Activated CD4-positive, alpha-beta T cell treated with anti-CD3 and anti-CD28 coated beads for 36 hours (primary cell): ENCODE measurements at regions of chr1 and their contacts with region 1.

Region 1: DNA sequence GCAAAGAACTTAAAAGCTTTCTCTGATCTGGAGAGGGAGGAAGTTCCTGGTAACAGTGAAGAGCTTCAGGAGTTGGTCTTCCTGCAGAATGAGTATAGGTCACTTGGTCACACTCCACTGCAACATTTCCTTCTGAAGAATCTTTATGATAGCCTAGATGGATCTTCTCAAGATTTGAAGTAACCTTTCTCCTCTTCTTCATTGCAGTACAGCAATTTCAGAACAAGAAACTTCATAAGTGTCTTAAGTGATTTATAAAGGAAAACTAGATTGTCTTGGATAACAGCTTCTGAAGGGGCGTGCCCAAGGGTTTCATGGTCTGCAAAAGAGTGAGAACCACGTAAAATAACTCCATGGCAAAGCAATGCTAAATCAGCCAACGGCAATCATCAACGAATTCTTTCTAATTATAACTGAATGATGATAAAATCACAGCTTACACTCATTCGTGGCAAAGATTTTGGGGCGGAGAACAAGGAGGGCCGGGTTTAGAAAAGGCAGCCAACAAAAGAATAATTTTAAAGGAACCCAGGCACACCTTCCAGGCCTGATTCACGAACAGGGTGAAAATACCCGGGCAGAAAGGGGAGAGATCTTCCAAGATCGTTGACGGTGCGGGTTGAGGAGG is 53.9 kb upstream of the ASPM start:
- DNase-seq: peak; percentile 48
- ATAC-seq: no peak
- H3K4me3 Mint-ChIP-seq: peak overlapping the region; percentile 96
- H3K27ac Mint-ChIP-seq: peak overlapping the region; percentile 94
- H3K4me1 Mint-ChIP-seq: peaks cover 54% of the 10 kb centered on the region
- H3K27me3 Mint-ChIP-seq: no peaks in the 10 kb centered on the region

Region 2: GRCh38 chr1:197156691-197157090 is 43.7 kb before region 1 on chr1:
- CTCF ChIA-PET with region 1: no interaction called
- POLR2A ChIA-PET with region 1: no interaction called
- intact Hi-C with region 1: no loop called
- DNase-seq: no peak
- ATAC-seq: no peak
- H3K4me3 Mint-ChIP-seq: no peak overlapping the region
- H3K27ac Mint-ChIP-seq: no peak overlapping the region
- H3K4me1 Mint-ChIP-seq: no peaks in the 10 kb centered on the region
- H3K27me3 Mint-ChIP-seq: no peaks in the 10 kb centered on the region

Region 3: GRCh38 chr1:197180252-197180878 is 20.0 kb before region 1 on chr1:
- CTCF ChIA-PET with region 1: interaction called, 12 read pairs
- POLR2A ChIA-PET with region 1: no interaction called
- intact Hi-C with region 1: no loop called
- DNase-seq: no peak
- ATAC-seq: peak; percentile 19
- H3K4me3 Mint-ChIP-seq: no peak overlapping the region
- H3K27ac Mint-ChIP-seq: no peak overlapping the region
- H3K4me1 Mint-ChIP-seq: peaks cover 3% of the 10 kb centered on the region
- H3K27me3 Mint-ChIP-seq: no peaks in the 10 kb centered on the region